Stomach (tissue), 19 donors: ENCODE measurements at regions of chr18 and their contacts with region 1.

Region 1: DNA sequence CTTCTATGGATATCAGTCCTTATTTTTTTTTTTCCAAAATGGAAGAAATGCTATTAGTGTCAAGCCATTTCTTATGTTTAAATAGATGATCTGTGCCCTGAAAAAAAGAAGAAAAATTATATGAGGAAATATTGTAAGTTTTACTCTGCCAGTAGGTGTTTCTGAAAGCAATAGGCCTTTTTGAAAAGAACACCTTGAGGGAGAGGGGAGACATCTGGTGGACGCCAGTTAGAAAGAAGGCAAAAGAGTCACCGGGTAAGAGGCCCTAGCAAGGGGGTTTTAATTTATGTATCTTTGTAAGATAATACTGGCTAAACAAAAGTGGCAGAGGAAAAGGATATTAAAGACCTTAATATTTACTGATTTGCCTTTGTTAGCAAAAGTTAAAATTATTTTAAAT is 56.1 kb downstream of the DYNAP start:
- DNase-seq: peak in 1 of 2 donors; percentile 78
- H3K4me3 ChIP-seq: no peak overlapping the region
- H3K27ac ChIP-seq: no peak overlapping the region
- H3K4me1 ChIP-seq: no peaks in the 10 kb centered on the region
- H3K27me3 ChIP-seq: no peaks in the 10 kb centered on the region
- CTCF ChIP-seq: peak in 4 of 7 experiments; percentile 22 to 49 (median 38)
- EP300 ChIP-seq: no peak
- POLR2A ChIP-seq: no peak

Region 2: GRCh38 chr18:54223568-54224241 is 423.5 kb before region 1 on chr18:
- intact Hi-C with region 1: no loop called
- DNase-seq: peak; percentile 69 to 92
- H3K4me3 ChIP-seq: peak overlapping the region; percentile 76 to 86 (median 82)
- H3K27ac ChIP-seq: peak overlapping the region; percentile 75 to 97 (median 89)
- H3K4me1 ChIP-seq: peaks cover 27 to 57% (median 44%) of the 10 kb centered on the region in 4 donors
- H3K27me3 ChIP-seq: no peaks in the 10 kb centered on the region
- CTCF ChIP-seq: no peak
- EP300 ChIP-seq: no peak
- POLR2A ChIP-seq: no peak

Region 3: GRCh38 chr18:54561706-54562267 is 85.4 kb before region 1 on chr18:
- intact Hi-C with region 1: loop called (anchors 10 kb)
- DNase-seq: no peak
- H3K4me3 ChIP-seq: no peak overlapping the region
- H3K27ac ChIP-seq: no peak overlapping the region
- H3K4me1 ChIP-seq: peaks cover 0 to 7% (median 0%) of the 10 kb centered on the region in 4 donors
- H3K27me3 ChIP-seq: no peaks in the 10 kb centered on the region
- CTCF ChIP-seq: no peak
- EP300 ChIP-seq: no peak
- POLR2A ChIP-seq: no peak

Region 4: DNA sequence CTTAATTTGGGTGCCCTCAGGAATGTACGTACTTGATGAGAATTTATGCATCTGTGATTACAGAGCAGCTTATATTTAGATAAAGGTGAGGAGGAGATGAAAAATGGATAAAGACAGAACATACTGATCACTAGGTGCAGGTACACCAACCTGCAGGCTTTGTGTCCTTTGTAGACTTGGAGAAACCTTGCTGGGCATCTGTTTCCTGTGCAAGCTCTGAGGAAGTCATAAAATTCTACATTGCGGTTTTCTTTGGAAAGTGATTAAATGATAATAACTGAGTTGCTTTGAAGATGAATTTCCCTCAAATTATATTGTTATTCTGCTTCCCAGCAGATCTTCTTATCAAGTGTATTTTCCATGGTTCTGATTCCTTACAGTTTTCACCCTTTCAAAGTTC is 188.8 kb after region 1 on chr18:
- intact Hi-C with region 1: no loop called
- DNase-seq: no peak
- H3K4me3 ChIP-seq: no peak overlapping the region
- H3K27ac ChIP-seq: no peak overlapping the region
- H3K4me1 ChIP-seq: peaks cover 0 to 5% (median under 1%) of the 10 kb centered on the region in 4 donors
- H3K27me3 ChIP-seq: no peaks in the 10 kb centered on the region
- CTCF ChIP-seq: no peak
- EP300 ChIP-seq: no peak
- POLR2A ChIP-seq: no peak